ENCODE measurements at regions of chr18 and their contacts with region 1.

Region 1: DNA sequence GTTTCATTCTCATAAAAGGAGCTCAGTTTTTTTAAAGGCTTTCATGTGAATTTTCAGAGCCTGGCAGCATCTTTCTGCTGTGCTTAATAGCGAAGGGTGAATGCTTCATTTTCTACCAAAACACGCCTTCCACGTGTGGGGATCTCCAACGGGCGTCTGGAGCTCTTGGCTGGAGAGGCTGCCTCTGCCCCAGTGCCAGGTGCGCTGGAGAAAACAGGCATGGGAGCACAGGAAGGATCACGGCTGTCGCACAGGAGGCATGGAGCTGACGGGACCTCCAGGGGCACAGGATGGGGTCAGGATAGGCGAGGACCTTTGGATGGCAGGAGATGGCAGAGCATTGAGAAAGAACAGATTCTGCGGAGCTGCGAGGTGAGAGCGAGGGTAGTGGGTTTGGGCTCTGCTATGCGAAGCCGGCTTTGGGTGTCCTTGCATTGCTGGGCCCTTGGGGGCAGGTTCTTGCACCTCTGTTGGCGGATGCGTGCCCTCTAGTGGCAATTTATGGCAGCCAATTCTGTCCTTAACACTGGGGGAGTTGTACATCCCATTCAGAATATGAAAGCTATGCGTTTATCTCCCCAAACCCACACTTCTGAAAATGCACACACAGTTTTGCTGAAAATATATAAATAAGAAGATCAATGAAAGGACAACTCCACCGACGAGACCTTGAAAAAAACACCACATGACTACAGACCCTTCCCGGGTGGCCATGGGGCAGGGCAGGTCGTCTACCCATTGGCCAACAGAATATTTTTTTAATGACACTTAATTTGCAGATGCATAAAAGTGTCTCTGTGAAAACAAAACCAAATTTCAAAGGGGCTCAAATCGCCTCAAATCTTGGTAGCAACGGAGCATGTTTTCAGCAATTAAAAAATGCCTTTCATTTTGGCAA is 90.4 kb upstream of the SLC35G4 start:
- DNase-seq: peak in 1 of 2 donors; percentile 14
- ATAC-seq: peak in 5 of 8 donors; percentile 50 to 62 (median 55)
- H3K4me3 ChIP-seq: no peak overlapping the region
- H3K27ac ChIP-seq: no peak overlapping the region
- H3K4me1 ChIP-seq: no peaks in the 10 kb centered on the region
- H3K27me3 ChIP-seq: peaks cover 0 to 6% (median 0%) of the 10 kb centered on the region in 7 donors
- CTCF ChIP-seq: peak; percentile 26 to 69 (median 57)

Region 2: GRCh38 chr18:11310476-11311086 is 208.5 kb before region 1 on chr18:
- intact Hi-C with region 1: loop called in 2 of 10 experiments (anchors 10 kb)
- DNase-seq: peak; percentile 26 to 31
- ATAC-seq: peak in 5 of 8 donors; percentile 47 to 70 (median 61)
- H3K4me3 ChIP-seq: no peak overlapping the region
- H3K27ac ChIP-seq: no peak overlapping the region
- H3K4me1 ChIP-seq: peaks cover 0 to 8% (median 0%) of the 10 kb centered on the region in 9 donors
- H3K27me3 ChIP-seq: no peaks in the 10 kb centered on the region
- CTCF ChIP-seq: peak in 8 of 9 donors; percentile 31 to 72 (median 66)

Region 3: GRCh38 chr18:11591957-11592356 is 72.9 kb after region 1 on chr18:
- intact Hi-C with region 1: no loop called
- DNase-seq: no peak
- ATAC-seq: no peak
- H3K4me3 ChIP-seq: no peak overlapping the region
- H3K27ac ChIP-seq: no peak overlapping the region
- H3K4me1 ChIP-seq: no peaks in the 10 kb centered on the region
- H3K27me3 ChIP-seq: peaks cover 0 to 19% (median 6%) of the 10 kb centered on the region in 7 donors
- CTCF ChIP-seq: no peak

Measured in heart right ventricle (tissue), 16 donors.